Activated CD8-positive, alpha-beta T cell treated with anti-CD3 and anti-CD28 coated beads, Interleukin-2, amount 10 ng/mL, durations not matched to agents 7 days and 5 days (primary cell): ENCODE measurements at regions of chrX and their contacts with region 1.

Region 1: DNA sequence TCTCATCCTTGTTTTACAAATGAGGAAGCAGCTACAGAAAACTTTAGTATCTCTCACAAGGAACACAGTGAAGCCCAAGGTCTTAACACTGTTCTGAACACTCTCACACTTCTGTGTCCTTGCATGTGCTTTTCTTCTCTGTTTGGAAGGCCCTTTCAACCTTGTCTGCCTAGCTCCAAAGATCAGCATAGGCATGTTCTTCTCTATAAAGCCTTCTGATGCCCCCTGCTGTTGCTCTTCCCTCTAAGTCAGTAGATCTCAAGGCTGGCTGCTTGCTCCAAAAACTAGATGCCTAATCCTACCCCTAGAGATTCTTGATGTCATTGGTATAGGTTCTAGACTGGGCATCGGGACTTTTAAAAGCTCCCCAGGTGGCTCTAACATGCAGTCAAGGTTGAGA is 5.9 kb downstream of the APOO start:
- DNase-seq: peak; percentile 58
- ATAC-seq: peak; percentile 87
- H3K4me3 Mint-ChIP-seq: no peak overlapping the region
- H3K27ac Mint-ChIP-seq: no peak overlapping the region
- H3K4me1 Mint-ChIP-seq: peaks cover 14% of the 10 kb centered on the region
- H3K27me3 Mint-ChIP-seq: no peaks in the 10 kb centered on the region

Region 2: GRCh38 chrX:23673108-23673507 is 228.7 kb before region 1 on chrX:
- CTCF ChIA-PET with region 1: interaction called, 17 read pairs
- POLR2A ChIA-PET with region 1: no interaction called
- DNase-seq: no peak
- ATAC-seq: no peak
- H3K4me3 Mint-ChIP-seq: no peak overlapping the region
- H3K27ac Mint-ChIP-seq: peak overlapping the region; percentile 46
- H3K4me1 Mint-ChIP-seq: peaks cover 24% of the 10 kb centered on the region
- H3K27me3 Mint-ChIP-seq: no peaks in the 10 kb centered on the region

Region 3: DNA sequence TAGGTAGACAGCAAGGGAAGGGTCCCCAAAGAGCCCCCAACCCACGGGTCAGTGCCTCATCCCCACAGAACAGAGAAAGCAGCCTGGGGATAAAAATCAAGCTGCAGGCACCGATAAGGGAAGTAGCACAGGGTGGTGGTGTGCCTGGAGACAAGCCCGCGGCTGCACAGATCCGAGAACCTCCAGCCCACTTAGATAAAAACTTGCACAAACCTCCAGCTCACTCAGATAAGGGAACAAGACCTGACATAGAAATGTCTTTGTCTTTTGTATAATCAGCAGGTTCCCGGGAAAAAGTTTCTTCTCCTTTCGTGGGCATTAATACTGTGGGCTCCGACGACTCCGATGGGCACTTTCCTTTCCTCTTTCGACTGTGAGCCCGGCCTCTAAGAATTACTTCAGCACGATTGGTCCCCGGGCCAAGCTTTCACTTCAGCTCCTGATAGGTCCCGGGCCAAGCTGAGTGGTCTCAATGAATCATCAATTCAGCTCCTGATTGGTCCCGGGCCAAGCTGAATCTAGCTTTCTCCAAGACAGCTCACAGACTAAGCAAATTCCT is 202.1 kb before region 1 on chrX:
- CTCF ChIA-PET with region 1: interaction called, 111 read pairs
- POLR2A ChIA-PET with region 1: interaction called, 3 read pairs
- DNase-seq: peak; percentile 36
- ATAC-seq: peak; percentile 72
- H3K4me3 Mint-ChIP-seq: peak overlapping the region; percentile 61
- H3K27ac Mint-ChIP-seq: peak overlapping the region; percentile 49
- H3K4me1 Mint-ChIP-seq: peaks cover 7% of the 10 kb centered on the region
- H3K27me3 Mint-ChIP-seq: no peaks in the 10 kb centered on the region

Region 4: GRCh38 chrX:23742697-23743622 is 158.8 kb before region 1 on chrX and contains the start of gene ACOT9:
- CTCF ChIA-PET with region 1: interaction called, 16 read pairs
- POLR2A ChIA-PET with region 1: no interaction called
- DNase-seq: peak; percentile 81
- ATAC-seq: peak; percentile 98
- H3K4me3 Mint-ChIP-seq: peak within 1 kb of the TSS; percentile 76
- H3K27ac Mint-ChIP-seq: peak within 1 kb of the TSS; percentile 89
- H3K4me1 Mint-ChIP-seq: peaks cover 32% of the 10 kb centered on the region
- H3K27me3 Mint-ChIP-seq: no peaks in the 10 kb centered on the region
- total RNA-seq, gene ACOT9: 23.5 to 29.0 TPM

Region 5: DNA sequence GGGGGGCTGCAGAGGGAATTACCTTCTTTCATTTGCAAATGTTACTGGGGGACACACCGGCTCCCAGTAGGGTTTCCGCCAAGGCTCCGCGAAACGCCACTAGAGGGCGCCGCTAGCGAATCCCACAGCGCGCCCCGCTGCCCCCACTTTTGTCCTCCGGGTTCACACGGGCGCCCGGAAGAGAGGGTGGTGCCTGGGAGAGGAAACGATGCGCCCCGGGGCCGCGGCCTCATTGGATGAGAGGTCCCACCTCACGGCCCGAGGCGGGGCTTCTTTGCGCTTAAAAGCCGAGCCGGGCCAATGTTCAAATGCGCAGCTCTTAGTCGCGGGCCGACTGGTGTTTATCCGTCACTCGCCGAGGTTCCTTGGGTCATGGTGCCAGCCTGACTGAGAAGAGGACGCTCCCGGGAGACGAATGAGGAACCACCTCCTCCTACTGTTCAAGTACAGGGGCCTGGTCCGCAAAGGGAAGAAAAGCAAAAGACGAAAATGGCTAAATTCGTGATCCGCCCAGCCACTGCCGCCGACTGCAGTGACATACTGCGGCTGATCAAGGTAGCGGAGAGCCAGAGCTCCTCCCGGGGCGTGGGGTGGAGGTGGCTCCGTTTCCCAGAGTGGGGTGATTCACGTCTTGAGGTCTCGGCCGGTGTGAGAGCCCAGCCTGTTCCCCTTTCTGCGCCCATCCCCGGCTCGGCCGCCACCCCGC is 118.8 kb before region 1 on chrX and contains the start of gene SAT1:
- CTCF ChIA-PET with region 1: interaction called, 106 read pairs
- POLR2A ChIA-PET with region 1: interaction called, 61 read pairs
- DNase-seq: peak; percentile 96
- ATAC-seq: peak; percentile 88
- H3K4me3 Mint-ChIP-seq: peak within 1 kb of the TSS; percentile 86
- H3K27ac Mint-ChIP-seq: peak within 1 kb of the TSS; percentile 98
- H3K4me1 Mint-ChIP-seq: peaks cover 34% of the 10 kb centered on the region
- H3K27me3 Mint-ChIP-seq: no peaks in the 10 kb centered on the region
- total RNA-seq, gene SAT1: 83.4 to 87.5 TPM

Region 6: DNA sequence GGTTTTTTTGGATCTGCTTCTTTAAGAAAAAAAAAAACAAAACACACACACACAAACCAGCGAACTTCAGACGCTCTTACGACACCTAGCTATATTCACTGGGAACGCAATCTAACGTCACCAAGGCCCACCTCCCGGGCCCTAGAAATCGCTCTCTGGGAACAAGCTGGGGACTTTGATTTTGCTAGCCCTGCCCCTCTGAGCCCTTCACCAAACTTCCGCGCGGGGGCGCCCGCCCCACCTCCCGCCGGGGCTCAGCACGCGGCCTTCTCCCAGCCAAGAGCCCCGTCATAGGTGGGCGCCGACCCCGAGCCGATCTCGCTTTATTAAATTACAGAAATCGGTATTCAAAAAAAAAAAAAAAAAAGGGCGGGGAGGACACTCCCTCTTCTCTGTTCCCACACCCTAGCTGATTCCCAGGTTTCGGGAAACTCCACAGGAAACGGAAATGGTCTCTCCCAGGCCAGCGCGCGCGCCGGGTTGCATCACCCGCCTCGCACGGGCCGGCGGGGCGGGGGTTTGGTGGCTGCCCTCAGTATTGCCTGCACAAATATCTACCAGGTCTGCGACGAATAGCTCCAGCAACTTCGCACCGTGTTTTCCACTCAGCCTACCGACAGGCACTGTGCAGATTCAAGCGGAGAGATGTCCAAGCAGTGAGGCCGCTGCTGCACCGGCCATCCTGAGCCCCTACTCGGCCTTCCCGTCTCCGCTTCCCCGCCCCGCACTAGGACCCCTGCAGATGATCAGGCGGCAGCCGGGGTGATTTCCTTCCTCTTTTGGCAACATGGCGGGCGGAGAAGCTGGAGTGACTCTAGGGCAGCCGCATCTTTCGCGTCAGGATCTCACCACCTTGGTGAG is 152.6 kb after region 1 on chrX and contains the start of gene EIF2S3:
- CTCF ChIA-PET with region 1: interaction called, 59 read pairs
- POLR2A ChIA-PET with region 1: interaction called, 20 read pairs
- DNase-seq: peak; percentile 91
- ATAC-seq: peak; percentile 89
- H3K4me3 Mint-ChIP-seq: no peak within 1 kb of the TSS
- H3K27ac Mint-ChIP-seq: peak within 1 kb of the TSS; percentile 100
- H3K4me1 Mint-ChIP-seq: peaks cover 6% of the 10 kb centered on the region
- H3K27me3 Mint-ChIP-seq: no peaks in the 10 kb centered on the region
- total RNA-seq, gene EIF2S3: 187 to 197 TPM